Naive thymus-derived CD4-positive, alpha-beta T cell (primary cell): ENCODE measurements at regions of chr5 and their contacts with region 1.

Region 1: DNA sequence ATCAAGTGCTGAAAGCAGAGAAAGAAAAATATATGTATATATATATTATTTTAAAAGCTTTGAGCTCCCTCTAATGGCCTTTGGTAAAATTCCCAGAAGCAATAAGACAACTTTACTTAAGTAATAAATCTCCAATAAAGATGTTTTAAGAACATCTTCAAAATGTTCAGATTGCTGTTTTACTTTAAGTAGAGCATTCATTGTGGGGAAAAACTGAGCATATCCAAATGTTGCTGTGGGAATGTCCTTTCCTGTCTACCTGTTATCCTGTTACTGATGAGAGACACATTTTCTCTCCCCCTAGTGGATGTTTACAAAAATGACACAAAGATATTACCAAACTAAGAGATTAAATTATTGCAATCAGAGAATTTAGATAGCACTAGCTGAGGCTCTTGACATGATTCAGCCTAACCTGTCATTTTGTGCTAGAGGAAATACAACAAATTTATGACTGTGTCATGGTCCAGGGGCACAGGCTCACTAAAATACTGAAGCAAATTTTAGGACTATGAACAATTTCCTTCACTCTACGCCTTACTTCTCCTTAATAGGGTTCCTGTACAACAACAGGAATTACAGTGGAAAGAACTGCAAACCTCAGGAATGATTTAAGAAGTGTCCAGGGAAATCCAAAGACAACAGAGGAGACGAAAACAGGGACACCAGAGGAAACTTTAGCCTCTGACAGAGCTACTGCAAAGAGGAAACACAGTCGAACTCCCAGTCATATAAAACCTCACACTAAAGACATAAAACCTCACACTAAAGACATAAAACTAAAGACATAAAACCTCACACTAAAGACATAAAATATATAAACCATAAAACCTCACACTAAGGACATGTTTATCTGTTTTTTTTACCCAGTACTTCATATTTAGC is 24.3 kb upstream of the PRRC1 start:
- DNase-seq: peak in 6 of 9 donors; percentile 24 to 63 (median 48)
- ATAC-seq: peak; percentile 71
- H3K4me3 ChIP-seq: no peak overlapping the region
- H3K4me3 Mint-ChIP-seq: no peak overlapping the region
- H3K27ac ChIP-seq: no peak overlapping the region
- H3K27ac Mint-ChIP-seq: no peak overlapping the region
- H3K4me1 ChIP-seq: no peaks in the 10 kb centered on the region
- H3K4me1 Mint-ChIP-seq: peaks cover 0 to 3% (median 0%) of the 10 kb centered on the region in 7 donors
- H3K27me3 ChIP-seq: no peaks in the 10 kb centered on the region
- H3K27me3 Mint-ChIP-seq: peaks cover 13 to 55% (median 29%) of the 10 kb centered on the region in 5 donors

Region 2: GRCh38 chr5:126354012-126354857 is 1138.9 kb before region 1 on chr5:
- CTCF ChIA-PET with region 1: no interaction called
- POLR2A ChIA-PET with region 1: no interaction called
- intact Hi-C with region 1: loop called in 1 of 2 experiments (anchors 5 kb)
- DNase-seq: peak in 7 of 9 donors; percentile 26 to 66 (median 53)
- ATAC-seq: peak; percentile 78
- H3K4me3 ChIP-seq: no peak overlapping the region
- H3K4me3 Mint-ChIP-seq: peak overlapping the region; percentile 12 to 80 (median 72)
- H3K27ac ChIP-seq: no peak overlapping the region
- H3K27ac Mint-ChIP-seq: peak overlapping the region in 7 of 9 donors; percentile 19 to 65 (median 36)
- H3K4me1 ChIP-seq: peaks cover 0 to 12% of the 10 kb centered on the region in 2 donors
- H3K4me1 Mint-ChIP-seq: peaks cover 3 to 21% (median 15%) of the 10 kb centered on the region in 7 donors
- H3K27me3 ChIP-seq: no peaks in the 10 kb centered on the region
- H3K27me3 Mint-ChIP-seq: peaks cover 0 to 16% (median 0%) of the 10 kb centered on the region in 5 donors

Region 3: DNA sequence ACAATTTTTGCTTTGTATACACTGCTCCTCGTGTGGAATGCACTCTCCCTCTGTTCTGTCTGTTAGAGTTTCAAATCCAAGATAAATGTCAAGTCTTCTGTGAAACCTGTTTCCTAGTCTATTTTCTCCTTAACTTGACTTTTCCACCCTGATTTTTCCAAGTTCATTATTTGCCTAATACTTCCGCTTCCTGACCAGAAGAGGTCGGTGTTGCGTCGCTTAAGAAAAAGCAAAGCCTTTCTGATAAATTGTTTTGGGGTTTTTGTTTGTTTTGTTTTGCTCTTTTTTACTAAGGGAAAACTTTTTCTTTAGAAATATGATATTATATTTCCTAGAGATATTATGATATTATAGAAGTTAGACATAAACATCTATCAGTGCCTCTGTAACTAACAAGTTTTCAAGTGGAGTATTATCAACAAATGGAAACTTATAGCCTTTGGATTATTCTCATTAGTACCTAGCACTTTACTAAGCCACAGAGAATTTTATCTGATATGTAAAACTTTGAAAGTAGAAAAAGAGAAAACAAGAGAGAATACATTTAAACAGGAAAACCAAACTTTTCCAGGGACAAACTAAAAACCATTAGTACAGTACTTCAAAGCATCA is 836.6 kb before region 1 on chr5:
- CTCF ChIA-PET with region 1: interaction called, 6 read pairs
- POLR2A ChIA-PET with region 1: no interaction called
- intact Hi-C with region 1: loop called (anchors 1 kb)
- DNase-seq: peak in 5 of 9 donors; percentile 13 to 27 (median 24)
- ATAC-seq: no peak
- H3K4me3 ChIP-seq: no peak overlapping the region
- H3K4me3 Mint-ChIP-seq: no peak overlapping the region
- H3K27ac ChIP-seq: no peak overlapping the region
- H3K27ac Mint-ChIP-seq: no peak overlapping the region
- H3K4me1 ChIP-seq: no peaks in the 10 kb centered on the region
- H3K4me1 Mint-ChIP-seq: peaks cover 0 to 8% (median 0%) of the 10 kb centered on the region in 7 donors
- H3K27me3 ChIP-seq: no peaks in the 10 kb centered on the region
- H3K27me3 Mint-ChIP-seq: peaks cover 0 to 9% (median 0%) of the 10 kb centered on the region in 5 donors

Region 4: GRCh38 chr5:126831156-126831555 is 661.9 kb before region 1 on chr5:
- CTCF ChIA-PET with region 1: no interaction called
- POLR2A ChIA-PET with region 1: no interaction called
- intact Hi-C with region 1: loop called in 1 of 2 experiments (anchors 10 kb)
- DNase-seq: no peak
- ATAC-seq: no peak
- H3K4me3 ChIP-seq: no peak overlapping the region
- H3K4me3 Mint-ChIP-seq: no peak overlapping the region
- H3K27ac ChIP-seq: no peak overlapping the region
- H3K27ac Mint-ChIP-seq: peak overlapping the region in 1 of 9 donors; percentile 6
- H3K4me1 ChIP-seq: no peaks in the 10 kb centered on the region
- H3K4me1 Mint-ChIP-seq: peaks cover 0 to 12% (median 0%) of the 10 kb centered on the region in 7 donors
- H3K27me3 ChIP-seq: no peaks in the 10 kb centered on the region
- H3K27me3 Mint-ChIP-seq: no peaks in the 10 kb centered on the region

Region 5: GRCh38 chr5:127290019-127290945 is 202.8 kb before region 1 on chr5 and contains the start of gene MEGF10:
- CTCF ChIA-PET with region 1: no interaction called
- POLR2A ChIA-PET with region 1: no interaction called
- intact Hi-C with region 1: loop called in 1 of 2 experiments (anchors 1 kb)
- DNase-seq: no peak
- ATAC-seq: no peak
- H3K4me3 ChIP-seq: no peak within 1 kb of the TSS
- H3K4me3 Mint-ChIP-seq: peak within 1 kb of the TSS in 8 of 10 donors; percentile 5 to 73 (median 56)
- H3K27ac ChIP-seq: no peak within 1 kb of the TSS
- H3K27ac Mint-ChIP-seq: no peak within 1 kb of the TSS
- H3K4me1 ChIP-seq: peaks cover 0 to 6% of the 10 kb centered on the region in 2 donors
- H3K4me1 Mint-ChIP-seq: peaks cover 0 to 21% (median 14%) of the 10 kb centered on the region in 7 donors
- H3K27me3 ChIP-seq: peaks cover 0 to 7% of the 10 kb centered on the region in 2 donors
- H3K27me3 Mint-ChIP-seq: peaks cover 72 to 91% (median 77%) of the 10 kb centered on the region in 5 donors
- total RNA-seq, gene MEGF10: not detected

Region 6: GRCh38 chr5:127386557-127386956 is 106.5 kb before region 1 on chr5:
- CTCF ChIA-PET with region 1: no interaction called
- POLR2A ChIA-PET with region 1: no interaction called
- intact Hi-C with region 1: no loop called
- DNase-seq: no peak
- ATAC-seq: no peak
- H3K4me3 ChIP-seq: no peak overlapping the region
- H3K4me3 Mint-ChIP-seq: no peak overlapping the region
- H3K27ac ChIP-seq: no peak overlapping the region
- H3K27ac Mint-ChIP-seq: no peak overlapping the region
- H3K4me1 ChIP-seq: no peaks in the 10 kb centered on the region
- H3K4me1 Mint-ChIP-seq: no peaks in the 10 kb centered on the region
- H3K27me3 ChIP-seq: no peaks in the 10 kb centered on the region
- H3K27me3 Mint-ChIP-seq: peaks cover 2 to 19% (median 14%) of the 10 kb centered on the region in 5 donors

Region 7: DNA sequence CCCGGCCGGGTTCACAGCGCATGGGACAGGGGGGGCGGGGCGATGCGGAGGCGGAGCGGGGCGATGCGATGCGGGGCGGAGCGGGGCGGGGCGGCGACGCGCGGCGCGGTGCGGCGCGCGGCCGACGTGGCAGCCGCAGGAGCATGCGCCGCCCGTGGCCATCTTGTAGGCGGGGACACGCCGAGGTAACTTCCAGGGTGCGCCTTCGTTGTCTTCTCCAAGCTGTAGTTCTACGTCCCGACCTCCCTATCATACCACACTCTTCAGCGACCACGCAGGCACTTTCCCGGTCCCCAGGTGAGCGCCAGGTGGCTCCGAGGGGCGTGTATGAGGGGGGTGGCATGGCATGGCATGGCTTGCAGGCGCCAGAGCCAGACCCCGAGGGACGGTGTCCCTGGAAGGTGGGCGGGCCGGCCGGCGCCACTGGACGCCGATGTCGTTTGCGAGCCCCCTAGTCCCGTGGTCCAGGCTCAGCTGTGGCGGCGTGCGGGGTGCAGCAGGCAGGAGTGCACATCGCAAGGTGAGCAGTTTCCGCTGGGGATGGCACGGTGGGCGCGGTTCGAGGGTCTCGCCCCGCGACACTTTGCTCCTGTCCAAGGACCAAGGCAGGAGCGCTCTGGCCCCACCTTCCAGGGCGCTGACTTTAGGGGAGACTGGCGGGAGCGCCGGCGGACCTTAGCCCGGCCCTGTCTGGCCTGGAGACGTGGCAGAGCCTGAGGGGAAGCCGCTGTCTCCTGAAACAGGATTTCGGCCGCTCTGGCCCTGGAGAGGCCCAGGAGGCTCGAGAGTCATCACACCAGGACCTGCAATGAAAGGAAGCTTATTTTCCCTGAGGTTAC is 24.6 kb after region 1 on chr5 and contains the start of gene PRRC1:
- CTCF ChIA-PET with region 1: interaction called, 3 read pairs
- POLR2A ChIA-PET with region 1: interaction called, 3 read pairs
- intact Hi-C with region 1: loop called in 1 of 2 experiments (anchors 1 kb)
- DNase-seq: peak; percentile 63 to 80 (median 74)
- ATAC-seq: peak; percentile 99
- H3K4me3 ChIP-seq: peak within 1 kb of the TSS; percentile 94
- H3K4me3 Mint-ChIP-seq: peak within 1 kb of the TSS; percentile 87 to 92 (median 89)
- H3K27ac ChIP-seq: peak within 1 kb of the TSS; percentile 89
- H3K27ac Mint-ChIP-seq: peak within 1 kb of the TSS; percentile 48 to 91 (median 82)
- H3K4me1 ChIP-seq: peaks cover 0 to 18% of the 10 kb centered on the region in 2 donors
- H3K4me1 Mint-ChIP-seq: peaks cover 25 to 48% (median 38%) of the 10 kb centered on the region in 7 donors
- H3K27me3 ChIP-seq: no peaks in the 10 kb centered on the region
- H3K27me3 Mint-ChIP-seq: peaks cover under 1 to 7% (median 6%) of the 10 kb centered on the region in 5 donors
- total RNA-seq, gene PRRC1: 34.6 to 56.6 (median 49.4) TPM

Region 8: GRCh38 chr5:127529904-127530682 is 37.0 kb after region 1 on chr5:
- CTCF ChIA-PET with region 1: no interaction called
- POLR2A ChIA-PET with region 1: no interaction called
- intact Hi-C with region 1: no loop called
- DNase-seq: no peak
- ATAC-seq: no peak
- H3K4me3 ChIP-seq: no peak overlapping the region
- H3K4me3 Mint-ChIP-seq: no peak overlapping the region
- H3K27ac ChIP-seq: no peak overlapping the region
- H3K27ac Mint-ChIP-seq: no peak overlapping the region
- H3K4me1 ChIP-seq: no peaks in the 10 kb centered on the region
- H3K4me1 Mint-ChIP-seq: peaks cover 0 to 16% (median 5%) of the 10 kb centered on the region in 7 donors
- H3K27me3 ChIP-seq: no peaks in the 10 kb centered on the region
- H3K27me3 Mint-ChIP-seq: no peaks in the 10 kb centered on the region